ENCODE measurements at regions of chr2 and their contacts with region 1.

Region 1: GRCh38 chr2:25165992-25166875 is 2.1 kb downstream of the POMC start:
- DNase-seq: peak in 8 of 9 experiments; percentile 21 to 77 (median 46)
- ATAC-seq: peak; percentile 52
- H3K4me3 ChIP-seq: no peak overlapping the region
- H3K4me3 Mint-ChIP-seq: no peak overlapping the region
- H3K27ac ChIP-seq: no peak overlapping the region
- H3K27ac Mint-ChIP-seq: no peak overlapping the region
- H3K4me1 ChIP-seq: peaks cover 13% of the 10 kb centered on the region
- H3K4me1 Mint-ChIP-seq: peaks cover 23% of the 10 kb centered on the region
- H3K27me3 ChIP-seq: peaks cover 8 to 20% of the 10 kb centered on the region in 2 experiments
- H3K27me3 Mint-ChIP-seq: peaks cover 34% of the 10 kb centered on the region
- CTCF ChIP-seq: peak; percentile 22

Region 2: GRCh38 chr2:25197336-25198208 is 31.3 kb after region 1 on chr2:
- CTCF ChIA-PET with region 1: interaction called, 35 read pairs
- POLR2A ChIA-PET with region 1: no interaction called
- intact Hi-C with region 1: loop called (anchors 1 to 2 kb)
- DNase-seq: no peak
- ATAC-seq: no peak
- H3K4me3 ChIP-seq: no peak overlapping the region
- H3K4me3 Mint-ChIP-seq: no peak overlapping the region
- H3K27ac ChIP-seq: no peak overlapping the region
- H3K27ac Mint-ChIP-seq: no peak overlapping the region
- H3K4me1 ChIP-seq: peaks cover 12% of the 10 kb centered on the region
- H3K4me1 Mint-ChIP-seq: peaks cover 14% of the 10 kb centered on the region
- H3K27me3 ChIP-seq: no peaks in the 10 kb centered on the region
- H3K27me3 Mint-ChIP-seq: no peaks in the 10 kb centered on the region
- CTCF ChIP-seq: no peak

Region 3: GRCh38 chr2:25228848-25229278 is 62.6 kb after region 1 on chr2:
- CTCF ChIA-PET with region 1: interaction called, 13 read pairs
- POLR2A ChIA-PET with region 1: no interaction called
- intact Hi-C with region 1: no loop called
- DNase-seq: peak in 6 of 9 experiments; percentile 20 to 74 (median 46)
- ATAC-seq: peak; percentile 75
- H3K4me3 ChIP-seq: no peak overlapping the region
- H3K4me3 Mint-ChIP-seq: no peak overlapping the region
- H3K27ac ChIP-seq: no peak overlapping the region
- H3K27ac Mint-ChIP-seq: no peak overlapping the region
- H3K4me1 ChIP-seq: no peaks in the 10 kb centered on the region
- H3K4me1 Mint-ChIP-seq: peaks cover 12% of the 10 kb centered on the region
- H3K27me3 ChIP-seq: no peaks in the 10 kb centered on the region
- H3K27me3 Mint-ChIP-seq: no peaks in the 10 kb centered on the region
- CTCF ChIP-seq: no peak

Measured in CD8-positive, alpha-beta T cell (primary cell).